SK-N-SH (cell line): ENCODE measurements at regions of chr2 and their contacts with region 1.

Region 1: GRCh38 chr2:49755777-49756176 is 601.5 kb upstream of the FSHR start:
- DNase-seq: no peak
- H3K4me3 ChIP-seq: no peak overlapping the region
- H3K27ac ChIP-seq: no peak overlapping the region
- H3K4me1 ChIP-seq: no peaks in the 10 kb centered on the region
- H3K27me3 ChIP-seq: no peaks in the 10 kb centered on the region
- CTCF ChIP-seq: no peak
- EP300 ChIP-seq: no peak
- RAD21 ChIP-seq: no peak

Region 2: GRCh38 chr2:49770919-49771318 is 15.1 kb after region 1 on chr2:
- CTCF ChIA-PET with region 1: interaction called, 11 read pairs
- POLR2A ChIA-PET with region 1: no interaction called
- DNase-seq: peak; percentile 35
- H3K4me3 ChIP-seq: no peak overlapping the region; a peak in 1 of 4 replicates
- H3K27ac ChIP-seq: no peak overlapping the region
- H3K4me1 ChIP-seq: no peaks in the 10 kb centered on the region
- H3K27me3 ChIP-seq: no peaks in the 10 kb centered on the region
- CTCF ChIP-seq: peak; percentile 44
- EP300 ChIP-seq: no peak
- RAD21 ChIP-seq: peak; percentile 84